Breast epithelium (tissue), 4 donors: ENCODE measurements at regions of chr2 and their contacts with region 1.

Region 1: GRCh38 chr2:152354909-152355308 is 19.9 kb downstream of the FMNL2 start:
- DNase-seq: no peak
- H3K4me3 ChIP-seq: no peak overlapping the region
- H3K27ac ChIP-seq: no peak overlapping the region
- H3K4me1 ChIP-seq: no peaks in the 10 kb centered on the region
- H3K27me3 ChIP-seq: no peaks in the 10 kb centered on the region
- CTCF ChIP-seq: no peak
- POLR2A ChIP-seq: no peak

Region 2: DNA sequence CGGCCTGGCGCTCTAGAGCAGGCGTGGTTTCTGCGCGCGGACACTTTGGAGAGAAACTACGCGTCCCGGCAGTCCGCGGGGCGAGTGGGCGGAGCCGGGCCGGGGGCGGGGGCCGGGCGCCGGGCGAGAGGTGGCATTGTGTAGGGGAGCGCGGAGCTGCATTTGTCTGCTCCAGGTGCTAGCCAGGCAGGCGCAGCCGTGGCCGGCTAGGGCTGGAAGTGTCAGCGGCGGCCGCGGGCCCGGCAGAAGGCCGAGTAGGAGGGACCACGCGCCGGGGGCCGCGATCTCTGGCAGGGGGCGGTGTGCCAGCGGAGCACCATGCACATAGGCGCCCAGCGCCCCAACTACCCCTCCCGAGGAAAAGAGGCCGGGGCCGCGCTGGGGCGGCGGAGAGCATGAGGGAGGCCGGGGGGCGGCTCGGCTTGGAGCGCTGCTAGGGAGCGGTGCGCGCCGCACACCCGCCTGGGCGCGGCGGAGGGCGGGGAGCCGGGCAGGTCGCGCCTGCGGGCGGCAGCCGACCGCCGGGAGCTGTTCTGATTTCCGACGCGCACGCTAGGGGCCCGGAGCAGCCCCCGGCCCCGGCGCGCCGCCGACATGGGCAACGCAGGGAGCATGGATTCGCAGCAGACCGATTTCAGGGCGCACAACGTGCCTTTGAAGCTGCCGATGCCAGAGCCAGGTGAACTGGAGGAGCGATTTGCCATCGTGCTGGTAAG is 19.7 kb before region 1 on chr2 and contains the start of gene FMNL2:
- intact Hi-C with region 1: loop called (anchors 2 kb)
- DNase-seq: peak; percentile 65 to 70
- H3K4me3 ChIP-seq: peak within 1 kb of the TSS; percentile 88 to 96 (median 95)
- H3K27ac ChIP-seq: peak within 1 kb of the TSS; percentile 72 to 89
- H3K4me1 ChIP-seq: no peaks in the 10 kb centered on the region
- H3K27me3 ChIP-seq: no peaks in the 10 kb centered on the region
- CTCF ChIP-seq: no peak
- POLR2A ChIP-seq: no peak
- total RNA-seq, gene FMNL2: 36.1 to 78.1 (median 40.0) TPM